CD4-positive, alpha-beta T cell (primary cell): ENCODE measurements at regions of chr20 and their contacts with region 1.

Region 1: DNA sequence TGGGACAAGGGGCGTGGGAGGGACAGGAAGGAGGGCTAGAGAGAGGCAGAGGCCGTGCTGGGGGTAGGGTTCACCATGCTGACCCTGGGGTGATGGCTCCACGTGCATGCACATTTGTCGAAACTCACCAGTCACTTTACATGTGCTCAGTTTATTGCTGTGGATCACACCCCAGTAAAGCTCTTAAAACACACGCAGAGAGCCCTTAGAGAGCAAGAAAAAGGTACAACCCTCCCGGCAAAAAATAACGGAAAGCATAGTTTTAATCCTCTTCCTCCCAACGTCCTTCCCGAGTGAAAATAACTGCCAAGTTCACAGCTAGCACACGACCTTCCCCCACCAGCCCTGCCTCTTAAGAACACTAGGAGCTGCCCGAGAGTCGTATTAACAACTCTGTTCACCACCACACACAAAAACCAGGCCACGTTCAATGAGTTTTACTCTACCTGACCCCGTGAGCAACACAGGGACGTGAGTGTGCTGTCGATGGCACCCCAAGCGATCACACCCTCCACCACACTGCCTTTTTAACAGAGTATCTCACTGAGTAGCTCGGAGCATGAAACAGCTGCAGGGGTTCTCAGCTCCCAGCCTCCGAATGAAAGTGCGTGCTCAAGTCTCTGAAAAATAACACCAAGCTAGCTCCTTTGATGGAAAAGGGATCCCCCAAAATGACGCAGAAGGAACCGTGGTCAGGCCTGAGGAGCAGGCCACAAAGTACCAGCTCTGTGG is 39.7 kb downstream of the TAF4 start:
- DNase-seq: peak in 8 of 14 experiments; percentile 7 to 66 (median 30)
- ATAC-seq: peak; percentile 79
- H3K4me3 ChIP-seq: no peak overlapping the region
- H3K4me3 Mint-ChIP-seq: peak overlapping the region; percentile 16
- H3K27ac ChIP-seq: no peak overlapping the region
- H3K27ac Mint-ChIP-seq: peak overlapping the region; percentile 70
- H3K4me1 ChIP-seq: peaks cover 35% of the 10 kb centered on the region
- H3K4me1 Mint-ChIP-seq: peaks cover 43% of the 10 kb centered on the region
- H3K27me3 ChIP-seq: no peaks in the 10 kb centered on the region
- H3K27me3 Mint-ChIP-seq: no peaks in the 10 kb centered on the region
- CTCF ChIP-seq: peak; percentile 57

Region 2: DNA sequence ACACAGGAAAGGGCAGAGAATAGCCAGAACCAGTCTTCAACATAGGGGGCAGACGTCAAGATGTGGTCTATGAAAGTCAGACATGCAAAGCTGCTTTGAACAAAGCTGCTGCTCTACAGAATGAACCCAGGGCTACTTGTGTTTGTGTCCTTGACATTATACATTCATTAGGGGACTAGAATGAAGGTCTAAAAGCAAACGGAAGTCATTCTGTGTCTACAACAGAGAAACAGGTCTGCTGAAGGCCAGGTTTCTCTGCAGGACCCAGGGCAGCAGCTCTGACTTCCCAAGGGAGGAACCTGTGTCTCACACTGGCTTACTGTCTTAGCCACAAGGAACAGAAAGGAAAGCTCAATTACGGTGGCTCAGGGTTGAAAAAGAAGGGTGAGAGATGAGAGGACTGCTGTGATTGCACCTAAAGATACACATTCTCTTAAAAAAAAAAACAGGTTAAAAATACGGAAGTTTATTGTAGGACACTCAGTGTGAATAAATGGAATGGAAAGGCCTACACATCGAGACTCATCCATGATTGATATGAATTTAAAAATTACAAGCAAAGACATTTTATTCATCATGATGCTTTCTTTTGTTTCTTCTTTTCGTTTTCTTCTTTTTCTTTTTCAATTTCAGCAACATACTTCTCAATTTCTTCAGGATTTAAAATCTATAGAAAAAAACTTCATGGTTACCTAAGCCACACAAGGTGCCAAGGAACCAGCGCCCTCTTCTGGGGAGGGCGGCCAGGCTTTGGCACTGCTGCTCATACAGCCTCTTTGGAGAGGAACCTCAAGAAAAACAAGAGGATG is 110.5 kb after region 1 on chr20:
- CTCF ChIA-PET with region 1: interaction called, 3 read pairs
- POLR2A ChIA-PET with region 1: interaction called, 4 read pairs
- intact Hi-C with region 1: loop called (anchors 1 kb)
- DNase-seq: peak; percentile 63 to 89 (median 75)
- ATAC-seq: peak; percentile 70
- H3K4me3 ChIP-seq: no peak overlapping the region
- H3K4me3 Mint-ChIP-seq: peak overlapping the region; percentile 66
- H3K27ac ChIP-seq: no peak overlapping the region
- H3K27ac Mint-ChIP-seq: peak overlapping the region; percentile 77
- H3K4me1 ChIP-seq: peaks cover 48% of the 10 kb centered on the region
- H3K4me1 Mint-ChIP-seq: peaks cover 56% of the 10 kb centered on the region
- H3K27me3 ChIP-seq: no peaks in the 10 kb centered on the region
- H3K27me3 Mint-ChIP-seq: no peaks in the 10 kb centered on the region
- CTCF ChIP-seq: peak; percentile 76

Region 3: GRCh38 chr20:62156592-62157386 is 130.8 kb after region 1 on chr20:
- CTCF ChIA-PET with region 1: no interaction called
- POLR2A ChIA-PET with region 1: no interaction called
- intact Hi-C with region 1: loop called in 1 of 2 experiments (anchors 5 kb)
- DNase-seq: peak; percentile 55 to 84 (median 66)
- ATAC-seq: peak; percentile 91
- H3K4me3 ChIP-seq: no peak overlapping the region
- H3K4me3 Mint-ChIP-seq: no peak overlapping the region
- H3K27ac ChIP-seq: no peak overlapping the region
- H3K27ac Mint-ChIP-seq: no peak overlapping the region
- H3K4me1 ChIP-seq: peaks cover 23% of the 10 kb centered on the region
- H3K4me1 Mint-ChIP-seq: peaks cover 22% of the 10 kb centered on the region
- H3K27me3 ChIP-seq: no peaks in the 10 kb centered on the region
- H3K27me3 Mint-ChIP-seq: no peaks in the 10 kb centered on the region
- CTCF ChIP-seq: peak; percentile 61